ENCODE measurements at regions of chr6 and their contacts with region 1.

Region 1: DNA sequence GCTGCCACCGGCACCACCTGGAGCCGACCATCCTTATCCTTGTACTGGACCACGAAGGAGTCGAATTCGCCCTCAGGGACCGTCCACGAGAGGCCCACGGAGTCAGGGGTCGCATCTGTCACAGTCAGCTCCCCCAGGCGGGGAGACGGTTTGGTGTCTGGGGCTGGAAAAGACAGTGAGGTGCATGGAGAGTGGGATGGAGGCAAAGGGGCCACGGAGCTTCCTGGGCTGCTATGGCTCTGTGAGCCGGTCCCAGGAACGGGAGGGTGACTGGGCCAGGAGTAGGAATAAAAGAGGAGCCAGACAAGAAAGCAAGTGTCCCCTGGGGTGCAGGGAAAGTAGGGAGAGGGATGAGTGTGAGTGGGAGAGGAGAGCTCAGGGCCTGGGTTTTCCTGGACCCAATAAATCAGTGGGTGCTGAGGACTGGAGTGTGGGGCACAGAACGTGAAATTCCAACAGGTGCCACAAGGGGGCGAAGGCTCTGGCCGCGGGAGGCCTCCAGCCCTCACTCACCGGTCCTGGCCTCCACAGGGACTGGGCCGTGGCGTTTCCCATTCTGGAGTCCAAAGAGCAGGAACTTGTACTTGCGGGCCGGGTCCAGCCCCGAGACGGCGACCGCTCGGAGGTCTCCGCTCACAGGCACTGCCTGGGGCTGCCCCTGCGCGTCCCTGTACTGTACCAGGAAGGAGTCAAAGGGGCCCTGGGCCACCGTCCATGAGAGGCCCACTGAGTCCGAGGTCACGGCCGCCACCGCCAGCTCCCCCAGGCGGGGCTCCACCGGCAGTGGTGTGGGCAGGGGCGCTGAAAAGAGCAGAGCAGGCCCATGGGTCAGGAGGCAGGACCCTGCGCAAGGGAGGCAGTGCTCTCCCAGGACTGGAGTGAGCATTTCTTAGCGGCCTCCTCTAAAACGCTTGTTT is 9.9 kb downstream of the CYP21A2 start:
- DNase-seq: no peak
- H3K4me3 ChIP-seq: no peak overlapping the region
- H3K27me3 ChIP-seq: peaks cover 2% of the 10 kb centered on the region
- CTCF ChIP-seq: peak; percentile 87

Region 2: DNA sequence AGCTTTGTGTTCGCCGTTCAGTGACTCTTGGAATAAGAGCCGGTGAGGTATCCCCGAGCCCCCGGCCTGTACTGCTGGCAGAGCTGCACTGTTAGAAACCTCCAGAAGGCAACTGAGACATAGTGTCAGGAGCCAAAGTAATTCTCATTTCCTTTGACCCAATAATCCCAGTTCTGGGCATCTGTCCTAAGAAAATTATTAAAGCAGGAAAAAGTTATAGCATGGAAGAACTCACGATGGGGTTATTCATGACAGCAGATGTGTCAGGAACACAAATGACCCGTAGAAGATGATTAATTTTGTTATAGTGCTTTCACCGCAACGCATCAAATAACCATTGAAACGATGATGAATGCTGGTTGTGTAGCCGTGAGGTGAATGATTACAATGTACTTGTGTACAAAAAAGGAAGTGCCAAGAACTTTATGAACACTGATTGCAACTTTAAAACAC is 10.4 kb after region 1 on chr6:
- CTCF ChIA-PET with region 1: interaction called, 20 read pairs
- POLR2A ChIA-PET with region 1: no interaction called
- DNase-seq: no peak
- H3K4me3 ChIP-seq: no peak overlapping the region
- H3K27me3 ChIP-seq: no peaks in the 10 kb centered on the region
- CTCF ChIP-seq: no peak

Region 3: DNA sequence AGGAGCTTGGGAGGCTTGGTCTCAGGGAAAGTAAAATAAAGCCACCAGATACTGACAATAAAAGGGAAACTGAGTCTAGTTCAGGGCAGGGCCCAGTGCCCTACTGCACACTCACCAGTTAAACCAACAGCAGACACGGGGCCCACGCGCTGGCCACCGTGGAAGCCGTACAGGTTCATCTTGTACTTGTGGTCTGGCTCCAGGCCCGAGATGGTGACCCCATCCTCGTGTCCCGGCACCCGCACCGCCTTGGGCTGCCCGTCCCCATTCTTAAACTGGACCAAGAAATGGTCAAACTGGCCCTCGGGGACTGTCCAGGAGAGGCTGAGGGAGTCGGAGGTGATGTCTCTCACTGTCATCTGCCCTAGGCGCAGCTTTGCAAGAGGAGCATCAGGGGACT is 16.6 kb after region 1 on chr6:
- CTCF ChIA-PET with region 1: interaction called, 20 read pairs
- POLR2A ChIA-PET with region 1: no interaction called
- DNase-seq: no peak
- H3K4me3 ChIP-seq: no peak overlapping the region
- H3K27me3 ChIP-seq: no peaks in the 10 kb centered on the region; the same call in 1 of the 2 replicates
- CTCF ChIP-seq: no peak